Common myeloid progenitor, CD34-positive (primary cell): ENCODE measurements at regions of chr1 and their contacts with region 1.

Region 1: GRCh38 chr1:119662034-119662437 is 14.0 kb upstream of the ZNF697 start:
- DNase-seq: no peak
- H3K4me3 ChIP-seq: no peak overlapping the region
- H3K27ac ChIP-seq: no peak overlapping the region
- H3K4me1 ChIP-seq: no peaks in the 10 kb centered on the region
- H3K27me3 ChIP-seq: no peaks in the 10 kb centered on the region

Region 2: DNA sequence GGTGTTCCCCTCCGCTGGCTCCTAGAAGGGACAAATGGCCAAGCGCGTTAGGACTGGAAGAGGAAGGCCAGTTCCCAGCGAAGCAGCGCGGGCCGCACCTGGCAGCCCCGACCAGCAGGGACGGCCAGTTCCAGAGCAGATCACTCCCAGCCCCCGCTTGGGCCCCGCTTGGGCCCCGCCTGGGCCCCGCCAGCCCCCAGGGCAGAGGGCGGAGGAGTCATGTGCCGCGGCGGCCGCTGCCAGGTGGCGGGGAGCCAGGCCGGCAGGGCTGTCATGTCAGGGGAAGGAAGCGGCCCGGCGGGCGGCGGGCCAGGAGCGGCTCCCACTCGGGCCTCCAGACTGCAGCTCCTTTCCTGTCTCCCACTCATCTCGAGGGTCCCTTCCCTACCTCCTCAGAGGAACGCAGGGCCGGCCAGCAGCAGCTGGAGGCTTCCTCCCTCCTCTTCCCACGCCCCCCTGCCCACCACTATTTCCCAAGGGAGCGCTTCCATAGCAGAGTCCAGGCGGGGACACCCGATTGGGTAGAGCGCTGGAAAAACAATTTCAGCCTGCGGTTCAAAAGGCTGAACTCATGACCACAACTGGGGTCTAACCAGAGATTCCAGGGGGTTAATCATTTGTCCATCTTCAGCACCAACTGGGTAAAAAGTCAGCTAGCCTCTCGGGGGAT is 30.5 kb before region 1 on chr1:
- CTCF ChIA-PET with region 1: interaction called, 328 read pairs
- POLR2A ChIA-PET with region 1: no interaction called
- DNase-seq: peak; percentile 59 to 79 (median 70)
- H3K4me3 ChIP-seq: peak overlapping the region in 5 of 7 experiments; percentile 15 to 66 (median 50)
- H3K27ac ChIP-seq: no peak overlapping the region
- H3K4me1 ChIP-seq: peaks cover 0 to 23% (median 21%) of the 10 kb centered on the region in 4 experiments
- H3K27me3 ChIP-seq: no peaks in the 10 kb centered on the region

Region 3: GRCh38 chr1:119675349-119676345 is 13.6 kb after region 1 on chr1:
- CTCF ChIA-PET with region 1: interaction called, 44 read pairs
- POLR2A ChIA-PET with region 1: no interaction called
- DNase-seq: peak; percentile 81 to 91 (median 86)
- H3K4me3 ChIP-seq: peak overlapping the region; percentile 8 to 86 (median 65)
- H3K27ac ChIP-seq: peak overlapping the region in 1 of 2 experiments; percentile 7
- H3K4me1 ChIP-seq: peaks cover 0 to 15% (median 4%) of the 10 kb centered on the region in 4 experiments
- H3K27me3 ChIP-seq: no peaks in the 10 kb centered on the region

Region 4: DNA sequence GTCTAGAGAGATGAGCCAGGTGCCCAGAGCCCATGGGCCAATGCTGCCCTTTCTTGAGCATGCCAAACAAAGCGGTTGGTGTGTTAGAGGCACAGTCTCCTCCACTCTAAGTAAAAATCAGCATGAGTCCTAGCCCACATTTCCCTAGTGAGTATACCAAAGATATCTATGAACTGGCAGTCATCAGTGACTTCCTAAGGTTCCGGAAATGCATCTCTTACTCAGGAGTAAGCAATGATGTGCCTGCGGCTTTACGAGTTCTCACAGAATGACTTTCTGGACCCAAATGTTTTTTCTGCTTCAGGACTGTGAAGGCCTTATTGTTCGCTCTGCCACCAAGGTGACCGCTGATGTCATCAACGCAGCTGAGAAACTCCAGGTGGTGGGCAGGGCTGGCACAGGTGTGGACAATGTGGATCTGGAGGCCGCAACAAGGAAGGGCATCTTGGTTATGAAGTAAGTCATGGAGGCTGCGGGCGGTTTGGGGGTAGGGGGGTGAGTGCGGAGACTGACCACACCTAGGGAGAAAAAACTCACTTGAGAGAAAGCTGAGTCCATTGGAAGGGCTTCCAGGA is 58.9 kb after region 1 on chr1:
- CTCF ChIA-PET with region 1: no interaction called
- POLR2A ChIA-PET with region 1: no interaction called
- DNase-seq: no peak
- H3K4me3 ChIP-seq: no peak overlapping the region
- H3K27ac ChIP-seq: no peak overlapping the region
- H3K4me1 ChIP-seq: peaks cover 0 to 8% (median 4%) of the 10 kb centered on the region in 4 experiments
- H3K27me3 ChIP-seq: no peaks in the 10 kb centered on the region